ENCODE measurements at regions of chr11 and their contacts with region 1.

Region 1: GRCh38 chr11:70270104-70270876 is at the start of gene PPFIA1:
- DNase-seq: peak; percentile 98
- ATAC-seq: peak; percentile 96
- H3K4me3 ChIP-seq: peak within 1 kb of the TSS; percentile 60 to 90 (median 75)
- H3K4me3 Mint-ChIP-seq: peak within 1 kb of the TSS; percentile 88
- H3K27ac ChIP-seq: peak within 1 kb of the TSS in 1 of 2 donors; percentile 77
- H3K27ac Mint-ChIP-seq: peak within 1 kb of the TSS; percentile 64
- H3K4me1 ChIP-seq: peaks cover 9 to 18% of the 10 kb centered on the region in 2 donors
- H3K4me1 Mint-ChIP-seq: peaks cover 31% of the 10 kb centered on the region
- H3K27me3 ChIP-seq: peaks cover 0 to 13% (median 2%) of the 10 kb centered on the region in 4 experiments
- H3K27me3 Mint-ChIP-seq: peaks cover 19% of the 10 kb centered on the region
- CTCF ChIP-seq: no peak
- total RNA-seq, gene PPFIA1: 70.4 and 80.7 TPM in 2 replicates

Region 2: DNA sequence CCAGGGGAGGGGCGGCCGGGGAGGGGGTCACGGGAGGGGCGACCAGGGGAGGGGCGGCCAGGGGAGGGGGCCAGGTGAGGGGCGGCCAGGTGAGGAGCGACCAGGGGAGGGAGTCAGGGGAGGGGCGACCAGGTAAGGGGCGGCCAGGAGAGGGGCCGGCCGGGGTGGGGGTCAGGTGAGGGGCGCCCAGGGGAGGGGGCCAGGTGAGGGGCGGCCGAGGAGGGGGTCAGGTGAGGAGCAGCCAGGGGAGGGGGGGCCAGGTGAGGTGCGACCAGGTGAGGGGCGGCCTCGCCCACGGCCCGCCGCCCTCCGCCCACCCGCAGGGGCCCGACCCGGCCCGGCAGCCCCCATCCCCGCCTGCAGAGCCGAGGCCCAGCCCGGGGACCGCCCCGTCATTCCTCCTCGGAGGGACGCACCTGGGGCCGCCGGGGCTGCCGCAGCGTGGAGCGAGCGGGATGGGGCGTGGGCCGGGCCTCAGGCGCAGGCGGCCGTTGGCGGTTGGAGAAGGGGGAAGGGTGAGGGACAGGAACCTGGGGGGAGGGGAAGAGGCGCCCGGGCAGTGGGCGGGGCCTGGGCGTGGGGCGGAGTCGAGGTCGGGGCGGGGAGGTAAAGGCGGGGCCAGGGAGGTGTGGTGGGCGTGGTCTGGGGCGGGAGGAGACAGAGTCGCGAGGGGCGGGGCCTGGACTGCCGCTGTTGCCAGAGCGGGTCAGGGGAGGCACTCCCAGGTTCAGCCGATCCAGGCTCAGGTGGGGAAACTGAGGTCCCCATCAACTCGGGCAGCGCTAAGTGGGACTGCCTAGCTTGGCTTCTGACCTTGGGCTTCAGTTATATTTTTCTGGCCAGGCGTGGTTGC is 1519.1 kb before region 1 on chr11 and contains the start of gene TESMIN:
- CTCF ChIA-PET with region 1: no interaction called
- POLR2A ChIA-PET with region 1: no interaction called
- intact Hi-C with region 1: loop called (anchors 10 kb)
- DNase-seq: peak; percentile 91
- ATAC-seq: peak; percentile 100
- H3K4me3 ChIP-seq: peak within 1 kb of the TSS in 3 of 5 experiments; percentile 53 to 68 (median 62)
- H3K4me3 Mint-ChIP-seq: peak within 1 kb of the TSS; percentile 83
- H3K27ac ChIP-seq: no peak within 1 kb of the TSS
- H3K27ac Mint-ChIP-seq: peak within 1 kb of the TSS; percentile 50
- H3K4me1 ChIP-seq: peaks cover 3 to 11% of the 10 kb centered on the region in 2 donors
- H3K4me1 Mint-ChIP-seq: peaks cover 12% of the 10 kb centered on the region
- H3K27me3 ChIP-seq: no peaks in the 10 kb centered on the region
- H3K27me3 Mint-ChIP-seq: no peaks in the 10 kb centered on the region
- CTCF ChIP-seq: no peak
- total RNA-seq, gene TESMIN: 4.3 and 4.6 TPM in 2 replicates

Region 3: GRCh38 chr11:70202898-70203748 is 67.2 kb before region 1 on chr11 and contains the start of gene FADD:
- CTCF ChIA-PET with region 1: interaction called, 3 read pairs
- POLR2A ChIA-PET with region 1: no interaction called
- intact Hi-C with region 1: loop called (anchors 1 kb)
- DNase-seq: peak; percentile 95
- ATAC-seq: peak; percentile 78
- H3K4me3 ChIP-seq: peak within 1 kb of the TSS; percentile 80 to 98 (median 96)
- H3K4me3 Mint-ChIP-seq: peak within 1 kb of the TSS; percentile 93
- H3K27ac ChIP-seq: peak within 1 kb of the TSS; percentile 49 to 84
- H3K27ac Mint-ChIP-seq: peak within 1 kb of the TSS; percentile 94
- H3K4me1 ChIP-seq: peaks cover 18 to 26% of the 10 kb centered on the region in 2 donors
- H3K4me1 Mint-ChIP-seq: peaks cover 31% of the 10 kb centered on the region
- H3K27me3 ChIP-seq: no peaks in the 10 kb centered on the region
- H3K27me3 Mint-ChIP-seq: no peaks in the 10 kb centered on the region
- CTCF ChIP-seq: no peak
- total RNA-seq, gene FADD: 26.6 and 27.1 TPM in 2 replicates